Activated CD8-positive, alpha-beta T cell treated with anti-CD3 and anti-CD28 coated beads, Interleukin-2, amount 10 ng/mL, durations not matched to agents 7 days and 5 days (primary cell): ENCODE measurements at regions of chr1 and their contacts with region 1.

Region 1: GRCh38 chr1:50978144-50978851 is 8.3 kb downstream of the CDKN2C start:
- DNase-seq: peak; percentile 56
- ATAC-seq: peak; percentile 62
- H3K4me3 Mint-ChIP-seq: peak overlapping the region; percentile 91
- H3K27ac Mint-ChIP-seq: peak overlapping the region; percentile 86
- H3K4me1 Mint-ChIP-seq: peaks cover 42% of the 10 kb centered on the region
- H3K27me3 Mint-ChIP-seq: peaks cover 14% of the 10 kb centered on the region

Region 2: GRCh38 chr1:50783286-50783685 is 195.0 kb before region 1 on chr1:
- CTCF ChIA-PET with region 1: no interaction called
- POLR2A ChIA-PET with region 1: no interaction called
- DNase-seq: no peak
- ATAC-seq: no peak
- H3K4me3 Mint-ChIP-seq: no peak overlapping the region
- H3K27ac Mint-ChIP-seq: no peak overlapping the region
- H3K4me1 Mint-ChIP-seq: peaks cover 9% of the 10 kb centered on the region
- H3K27me3 Mint-ChIP-seq: no peaks in the 10 kb centered on the region

Region 3: GRCh38 chr1:50959913-50960844 is 18.1 kb before region 1 on chr1 and contains the start of gene FAF1:
- CTCF ChIA-PET with region 1: interaction called, 15 read pairs
- POLR2A ChIA-PET with region 1: interaction called, 53 read pairs
- DNase-seq: peak; percentile 98
- ATAC-seq: peak; percentile 95
- H3K4me3 Mint-ChIP-seq: peak within 1 kb of the TSS; percentile 83
- H3K27ac Mint-ChIP-seq: peak within 1 kb of the TSS; percentile 90
- H3K4me1 Mint-ChIP-seq: peaks cover 26% of the 10 kb centered on the region
- H3K27me3 Mint-ChIP-seq: no peaks in the 10 kb centered on the region
- total RNA-seq, gene FAF1: 95.6 to 104 TPM

Region 4: DNA sequence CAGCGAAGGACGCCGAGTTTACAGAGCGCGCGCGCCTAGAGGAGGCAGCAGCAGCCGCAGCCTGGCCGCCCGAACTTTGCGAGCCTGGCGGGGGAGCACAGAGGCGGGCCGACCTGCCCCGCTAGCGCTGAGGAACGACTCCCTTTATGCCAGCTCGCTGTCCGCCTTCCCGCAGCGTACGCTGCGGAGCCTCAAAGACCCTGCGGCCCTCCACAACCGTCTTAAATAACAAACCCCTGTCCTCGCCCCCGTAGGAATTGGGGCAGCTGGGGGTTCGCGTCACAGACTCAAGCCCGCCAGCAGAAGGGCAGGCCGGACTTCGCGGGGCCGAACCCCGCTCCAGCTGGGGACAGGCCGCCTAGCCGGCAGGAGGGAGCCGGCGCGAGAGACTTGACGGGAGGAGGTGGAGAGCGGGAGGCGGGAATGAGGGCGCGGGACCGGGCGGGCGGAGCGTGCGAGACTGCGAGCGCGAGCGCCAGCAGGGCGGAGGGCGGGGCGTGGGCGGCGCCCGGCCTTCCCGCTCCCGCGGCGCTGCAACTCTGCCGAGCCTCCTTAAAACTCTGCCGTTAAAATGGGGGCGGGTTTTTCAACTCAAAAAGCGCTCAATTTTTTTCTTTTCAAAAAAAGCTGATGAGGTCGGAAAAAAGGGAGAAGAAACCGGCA is 10.0 kb before region 1 on chr1:
- CTCF ChIA-PET with region 1: interaction called, 20 read pairs
- POLR2A ChIA-PET with region 1: interaction called, 85 read pairs
- DNase-seq: peak; percentile 89
- ATAC-seq: peak; percentile 82
- H3K4me3 Mint-ChIP-seq: peak overlapping the region; percentile 98
- H3K27ac Mint-ChIP-seq: peak overlapping the region; percentile 100
- H3K4me1 Mint-ChIP-seq: peaks cover 24% of the 10 kb centered on the region
- H3K27me3 Mint-ChIP-seq: no peaks in the 10 kb centered on the region